Gastrocnemius medialis (tissue), 4 donors: ENCODE measurements at regions of chr15 and their contacts with region 1.

Region 1: GRCh38 chr15:25670025-25670554 is 193.0 kb downstream of the ATP10A start:
- DNase-seq: peak; percentile 81 to 88
- ATAC-seq: peak; percentile 70 to 77
- H3K4me3 ChIP-seq: peak overlapping the region; percentile 4 to 34 (median 28)
- H3K27ac ChIP-seq: peak overlapping the region; percentile 79 to 91 (median 86)
- H3K4me1 ChIP-seq: peaks cover 48 to 49% of the 10 kb centered on the region in 2 donors
- H3K27me3 ChIP-seq: no peaks in the 10 kb centered on the region
- CTCF ChIP-seq: peak in 1 of 5 experiments; percentile 9
- POLR2A ChIP-seq: peak; percentile 45 to 63

Region 2: DNA sequence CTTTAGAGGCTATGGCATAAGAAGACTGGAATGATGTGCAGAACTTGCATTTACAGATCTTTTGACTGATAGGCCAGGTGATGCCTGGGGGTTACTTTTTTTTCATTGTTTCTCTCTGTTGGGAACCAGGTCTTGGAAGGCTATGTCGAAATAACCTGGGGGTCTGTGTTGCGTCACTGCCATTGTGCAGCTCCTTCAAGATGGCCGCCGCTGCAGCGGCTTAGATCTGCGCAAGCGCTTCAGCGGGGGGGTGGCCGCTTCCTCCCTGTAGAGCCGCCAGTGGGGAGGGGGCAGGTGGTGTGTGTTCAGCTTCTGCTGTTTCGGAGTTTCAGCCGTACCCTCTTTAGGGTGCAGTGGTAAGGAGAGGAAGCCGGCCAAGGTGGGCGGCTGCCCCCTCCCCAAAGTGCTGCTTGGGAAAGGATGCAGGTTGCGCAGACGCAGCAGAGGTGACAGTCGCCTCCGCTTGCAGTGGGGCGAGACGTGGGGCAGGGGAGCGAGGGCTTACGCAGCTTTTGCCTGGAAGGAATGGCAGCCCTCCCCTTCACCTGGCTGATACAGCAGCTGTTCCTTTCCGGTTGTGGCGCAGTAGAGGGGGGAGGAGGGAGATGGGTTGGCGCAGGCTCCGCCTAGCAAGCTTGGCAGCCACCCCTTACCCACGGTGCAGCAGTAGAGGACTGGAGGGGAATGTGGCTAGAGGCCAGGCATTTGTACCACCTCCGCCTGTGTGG is 713.8 kb before region 1 on chr15:
- in situ Hi-C with region 1: no loop called
- intact Hi-C with region 1: loop called (anchors 5 kb)
- DNase-seq: peak; percentile 69 to 89
- ATAC-seq: peak; percentile 75
- H3K4me3 ChIP-seq: peak overlapping the region; percentile 72 to 86 (median 82)
- H3K27ac ChIP-seq: peak overlapping the region; percentile 87 to 96 (median 94)
- H3K4me1 ChIP-seq: peaks cover 0 to 9% of the 10 kb centered on the region in 2 donors
- H3K27me3 ChIP-seq: no peaks in the 10 kb centered on the region
- CTCF ChIP-seq: no peak
- POLR2A ChIP-seq: peak in 1 of 2 donors; percentile 25

Region 3: DNA sequence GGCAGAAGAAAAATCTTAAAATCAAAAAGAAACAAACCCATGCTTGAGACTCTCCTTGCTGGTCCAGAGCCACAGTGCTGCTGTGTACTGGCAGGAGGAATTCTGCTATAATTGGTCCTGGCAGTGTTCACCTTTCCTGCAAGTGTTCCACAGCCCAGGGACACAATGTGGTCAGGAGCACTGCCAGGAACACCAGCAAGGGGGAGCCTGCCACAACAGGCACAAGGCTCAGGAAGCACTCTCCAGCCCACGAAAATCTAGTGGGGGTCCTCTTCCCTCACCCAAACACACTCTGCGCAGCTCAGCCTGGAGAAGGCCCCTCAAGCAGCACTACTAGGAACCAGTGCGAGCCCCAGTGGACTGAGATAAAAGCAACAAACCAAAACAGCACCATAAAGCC is 324.1 kb before region 1 on chr15:
- in situ Hi-C with region 1: no loop called
- intact Hi-C with region 1: loop called (anchors 10 kb)
- DNase-seq: peak; percentile 86 to 92
- ATAC-seq: peak; percentile 99 to 100
- H3K4me3 ChIP-seq: peak overlapping the region; percentile 15 to 33 (median 24)
- H3K27ac ChIP-seq: peak overlapping the region; percentile 81 to 90 (median 89)
- H3K4me1 ChIP-seq: peaks cover 23 to 33% of the 10 kb centered on the region in 2 donors
- H3K27me3 ChIP-seq: no peaks in the 10 kb centered on the region
- CTCF ChIP-seq: peak; percentile 30 to 60 (median 54)
- POLR2A ChIP-seq: peak in 1 of 2 donors; percentile 7

Region 4: GRCh38 chr15:25568751-25569150 is 101.3 kb before region 1 on chr15:
- in situ Hi-C with region 1: no loop called
- intact Hi-C with region 1: loop called (anchors 5 kb)
- DNase-seq: peak; percentile 10 to 73
- ATAC-seq: peak; percentile 83 to 91
- H3K4me3 ChIP-seq: no peak overlapping the region
- H3K27ac ChIP-seq: peak overlapping the region; percentile 5 to 37 (median 16)
- H3K4me1 ChIP-seq: peaks cover 33 to 36% of the 10 kb centered on the region in 2 donors
- H3K27me3 ChIP-seq: no peaks in the 10 kb centered on the region
- CTCF ChIP-seq: no peak
- POLR2A ChIP-seq: no peak

Region 5: DNA sequence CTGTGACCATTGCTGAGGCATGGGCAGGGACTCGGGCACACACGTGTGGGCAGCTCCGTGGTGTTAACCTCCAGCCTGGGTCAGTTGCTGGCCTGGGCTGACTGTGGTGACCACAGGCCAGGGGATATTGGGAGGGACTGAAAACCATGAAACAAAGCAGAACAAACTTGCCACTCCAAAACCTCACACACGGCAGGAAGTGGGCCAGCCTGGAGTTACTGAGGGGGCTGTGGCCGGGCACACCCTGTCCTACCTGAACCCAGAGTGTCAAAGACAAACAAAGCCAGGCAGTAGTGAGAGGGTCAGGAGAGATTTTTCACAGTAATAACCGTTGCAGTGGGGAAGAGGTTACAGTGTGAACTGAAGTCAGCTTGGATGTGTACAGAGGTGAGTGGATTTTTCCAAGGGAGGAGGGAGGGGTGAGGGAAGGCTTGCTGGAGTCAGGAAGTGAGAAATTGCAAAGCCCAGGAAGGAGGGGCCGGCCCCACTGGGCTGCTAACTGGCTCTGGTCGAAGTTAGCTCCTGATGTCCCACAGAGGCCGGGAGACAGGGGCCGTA is 233.0 kb after region 1 on chr15:
- in situ Hi-C with region 1: no loop called
- intact Hi-C with region 1: loop called (anchors 5 kb)
- DNase-seq: no peak
- ATAC-seq: no peak
- H3K4me3 ChIP-seq: no peak overlapping the region
- H3K27ac ChIP-seq: no peak overlapping the region
- H3K4me1 ChIP-seq: peaks cover 10 to 11% of the 10 kb centered on the region in 2 donors
- H3K27me3 ChIP-seq: no peaks in the 10 kb centered on the region
- CTCF ChIP-seq: no peak
- POLR2A ChIP-seq: no peak